HepG2 (cell line): ENCODE measurements at regions of chr13 and their contacts with region 1.

Region 1: GRCh38 chr13:113022391-113023216 is 53.6 kb downstream of the MCF2L start:
- DNase-seq: peak; percentile 98
- ATAC-seq: peak; percentile 81
- H3K4me3 ChIP-seq: peak overlapping the region in 2 of 3 experiments; percentile 35 to 36; a peak in 3 of 6 replicates
- H3K27ac ChIP-seq: peak overlapping the region; percentile 85
- H3K4me1 ChIP-seq: peaks cover 46% of the 10 kb centered on the region
- H3K27me3 ChIP-seq: no peaks in the 10 kb centered on the region
- CTCF ChIP-seq: no peak
- EP300 ChIP-seq: peak; percentile 69 to 92; a peak in 3 of 4 replicates
- POLR2A ChIP-seq: peak in 1 of 2 experiments; percentile 47; a peak in 1 of 4 replicates
- RAD21 ChIP-seq: no peak

Region 2: DNA sequence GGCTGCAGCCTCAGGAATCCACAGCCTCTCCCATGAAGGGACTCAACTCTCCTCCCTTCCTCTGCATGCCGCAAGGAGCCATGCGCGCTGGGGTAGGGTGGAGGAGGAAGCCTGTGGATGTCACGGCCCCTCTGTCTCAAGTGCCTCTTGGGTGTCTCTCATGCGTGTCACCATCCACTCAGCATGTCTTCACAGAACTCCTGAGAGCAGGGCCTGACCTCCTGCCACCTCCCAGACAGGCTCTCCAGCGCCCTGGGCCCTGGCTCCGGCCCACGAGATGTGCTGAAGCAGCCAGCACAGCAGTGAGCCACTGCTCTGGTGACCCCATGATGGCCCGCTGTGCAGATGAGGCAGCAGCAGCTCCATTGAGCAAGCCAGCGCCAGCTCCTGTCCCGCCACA is 672.3 kb before region 1 on chr13:
- CTCF ChIA-PET with region 1: no interaction called
- POLR2A ChIA-PET with region 1: no interaction called
- in situ Hi-C with region 1: no loop called
- intact Hi-C with region 1: no loop called
- DNase-seq: no peak
- ATAC-seq: no peak
- H3K4me3 ChIP-seq: no peak overlapping the region
- H3K27ac ChIP-seq: no peak overlapping the region
- H3K4me1 ChIP-seq: peaks cover 9% of the 10 kb centered on the region; the same call in 1 of the 2 replicates
- H3K27me3 ChIP-seq: peaks cover 7 to 65% of the 10 kb centered on the region in 2 experiments
- CTCF ChIP-seq: no peak
- EP300 ChIP-seq: no peak
- POLR2A ChIP-seq: no peak
- RAD21 ChIP-seq: no peak

Region 3: GRCh38 chr13:112510002-112510780 is 512.4 kb before region 1 on chr13:
- CTCF ChIA-PET with region 1: no interaction called
- POLR2A ChIA-PET with region 1: no interaction called
- in situ Hi-C with region 1: no loop called
- intact Hi-C with region 1: no loop called
- DNase-seq: peak; percentile 52
- ATAC-seq: peak; percentile 93
- H3K4me3 ChIP-seq: no peak overlapping the region
- H3K27ac ChIP-seq: no peak overlapping the region
- H3K4me1 ChIP-seq: no peaks in the 10 kb centered on the region
- H3K27me3 ChIP-seq: no peaks in the 10 kb centered on the region
- CTCF ChIP-seq: peak; percentile 56
- EP300 ChIP-seq: no peak
- POLR2A ChIP-seq: no peak
- RAD21 ChIP-seq: no peak

Region 4: GRCh38 chr13:113001241-113002140 is 21.1 kb before region 1 on chr13:
- CTCF ChIA-PET with region 1: interaction called, 3 read pairs
- POLR2A ChIA-PET with region 1: interaction called, 18 read pairs
- in situ Hi-C with region 1: no loop called
- intact Hi-C with region 1: no loop called
- DNase-seq: peak; percentile 47
- ATAC-seq: peak; percentile 82
- H3K4me3 ChIP-seq: peak overlapping the region; percentile 61 to 76 (median 64); a peak in 5 of 6 replicates
- H3K27ac ChIP-seq: peak overlapping the region; percentile 37
- H3K4me1 ChIP-seq: peaks cover 60% of the 10 kb centered on the region
- H3K27me3 ChIP-seq: no peaks in the 10 kb centered on the region
- CTCF ChIP-seq: peak; percentile 11; the same call in 1 of the 2 replicates
- EP300 ChIP-seq: no peak
- POLR2A ChIP-seq: no peak
- RAD21 ChIP-seq: no peak

Region 5: DNA sequence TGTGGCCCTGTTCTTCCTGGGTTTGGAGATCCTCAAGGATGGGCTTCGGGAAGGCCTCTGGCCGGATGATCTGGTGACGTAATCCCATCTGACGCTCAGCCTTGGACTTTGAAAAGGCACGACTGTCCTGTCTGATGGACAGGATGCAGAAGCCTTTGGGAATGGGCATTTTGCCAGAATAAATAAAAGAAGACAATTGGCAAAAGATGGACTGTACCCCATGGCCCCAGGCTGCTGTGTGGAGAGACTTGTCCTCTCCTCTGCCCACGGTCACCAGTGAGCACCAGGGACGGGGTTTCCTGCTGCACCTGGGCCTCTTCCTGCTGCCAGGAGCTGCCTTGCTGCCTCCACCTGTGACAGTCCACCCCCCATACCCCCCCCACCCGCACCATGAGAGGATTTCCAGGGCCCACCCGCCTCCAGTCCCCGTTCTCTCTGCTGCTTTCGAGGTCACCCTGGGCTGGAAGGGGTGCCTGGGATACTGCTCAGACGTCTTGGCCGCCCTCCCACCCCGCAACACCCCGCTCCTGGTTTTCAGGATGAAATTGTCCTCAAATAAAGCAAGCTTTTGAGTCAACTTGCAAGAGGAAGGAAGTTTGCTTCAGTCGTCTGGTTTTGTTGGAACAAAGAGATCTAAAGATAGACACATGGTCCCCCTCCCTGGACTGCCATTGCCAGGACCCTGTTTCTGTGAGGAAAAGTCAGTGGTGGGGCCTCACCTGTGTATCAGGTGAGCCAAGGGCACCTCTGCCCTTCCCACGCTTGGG is 12.7 kb before region 1 on chr13:
- CTCF ChIA-PET with region 1: no interaction called
- POLR2A ChIA-PET with region 1: interaction called, 4 read pairs
- in situ Hi-C with region 1: no loop called
- intact Hi-C with region 1: loop called (anchors 1 kb)
- DNase-seq: peak; percentile 98
- ATAC-seq: peak; percentile 90
- H3K4me3 ChIP-seq: no peak overlapping the region
- H3K27ac ChIP-seq: peak overlapping the region; percentile 80
- H3K4me1 ChIP-seq: peaks cover 61% of the 10 kb centered on the region
- H3K27me3 ChIP-seq: no peaks in the 10 kb centered on the region
- CTCF ChIP-seq: no peak
- EP300 ChIP-seq: peak; percentile 79 to 91
- POLR2A ChIP-seq: no peak
- RAD21 ChIP-seq: peak; percentile 32; the same call in 1 of the 2 replicates

Region 6: DNA sequence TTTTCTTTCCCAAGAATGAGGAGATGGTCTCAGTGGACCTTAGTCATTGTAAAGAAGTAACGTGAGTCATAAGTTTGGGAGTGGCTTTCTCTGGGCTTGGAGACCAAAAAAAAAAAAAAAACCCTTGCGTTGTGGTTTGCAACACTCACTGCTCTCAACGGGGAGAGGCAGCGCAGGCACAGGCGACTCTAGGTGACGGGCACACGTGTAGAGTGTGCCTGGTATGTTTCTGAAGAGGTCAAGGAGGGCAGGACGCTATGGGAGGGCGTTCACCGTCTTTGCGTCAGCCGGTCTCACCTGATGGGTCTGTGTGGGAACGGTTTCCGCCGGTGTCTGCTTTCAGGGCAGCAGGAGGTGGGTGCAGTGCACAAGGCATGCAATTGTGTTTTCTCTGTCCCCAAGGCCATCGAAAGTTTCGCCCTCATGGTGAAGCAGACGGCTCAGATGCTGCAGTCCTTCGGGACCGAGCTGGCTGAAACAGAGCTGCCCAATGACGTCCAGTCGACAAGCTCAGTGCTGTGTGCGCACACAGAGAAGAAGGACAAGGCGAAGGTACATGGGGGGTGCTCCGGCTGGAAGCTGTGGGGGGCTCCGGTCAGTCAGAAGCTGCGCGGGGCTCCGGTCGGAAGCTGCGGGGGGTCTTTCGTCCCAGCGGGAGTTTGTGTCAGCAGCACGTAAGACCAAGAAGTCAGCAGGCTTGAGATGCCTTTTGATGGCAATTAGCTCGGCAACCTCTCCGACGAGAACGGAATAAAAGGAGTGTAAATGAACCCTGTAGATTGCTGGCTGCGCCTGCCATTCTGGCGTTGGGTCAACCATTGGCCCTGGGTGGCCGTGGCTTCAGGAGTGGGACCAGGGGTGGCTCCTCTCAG is 42.2 kb after region 1 on chr13:
- CTCF ChIA-PET with region 1: no interaction called
- POLR2A ChIA-PET with region 1: no interaction called
- in situ Hi-C with region 1: no loop called
- intact Hi-C with region 1: no loop called
- DNase-seq: no peak
- ATAC-seq: no peak
- H3K4me3 ChIP-seq: no peak overlapping the region
- H3K27ac ChIP-seq: no peak overlapping the region
- H3K4me1 ChIP-seq: no peaks in the 10 kb centered on the region
- H3K27me3 ChIP-seq: no peaks in the 10 kb centered on the region
- CTCF ChIP-seq: no peak
- EP300 ChIP-seq: no peak
- POLR2A ChIP-seq: no peak
- RAD21 ChIP-seq: no peak